ENCODE measurements at regions of chr9 and their contacts with region 1.

Region 1: GRCh38 chr9:127785023-127785932 is 556 bp upstream of the CDK9 start:
- DNase-seq: peak; percentile 97
- H3K4me3 ChIP-seq: peak overlapping the region; percentile 82 to 90
- H3K27ac ChIP-seq: peak overlapping the region; percentile 47 to 92; a peak in 3 of 4 replicates
- H3K4me1 ChIP-seq: peaks cover 6 to 18% of the 10 kb centered on the region in 2 experiments
- H3K27me3 ChIP-seq: no peaks in the 10 kb centered on the region
- CTCF ChIP-seq: peak; percentile 79
- EP300 ChIP-seq: no peak
- RAD21 ChIP-seq: peak; percentile 80

Region 2: GRCh38 chr9:126947529-126947928 is 837.7 kb before region 1 on chr9:
- CTCF ChIA-PET with region 1: no interaction called
- POLR2A ChIA-PET with region 1: no interaction called
- DNase-seq: no peak
- H3K4me3 ChIP-seq: no peak overlapping the region
- H3K27ac ChIP-seq: no peak overlapping the region
- H3K4me1 ChIP-seq: no peaks in the 10 kb centered on the region; a peak in 2 of 4 replicates
- H3K27me3 ChIP-seq: no peaks in the 10 kb centered on the region
- CTCF ChIP-seq: no peak
- EP300 ChIP-seq: no peak
- RAD21 ChIP-seq: peak; percentile 33; the same call in 1 of the 2 replicates

Region 3: DNA sequence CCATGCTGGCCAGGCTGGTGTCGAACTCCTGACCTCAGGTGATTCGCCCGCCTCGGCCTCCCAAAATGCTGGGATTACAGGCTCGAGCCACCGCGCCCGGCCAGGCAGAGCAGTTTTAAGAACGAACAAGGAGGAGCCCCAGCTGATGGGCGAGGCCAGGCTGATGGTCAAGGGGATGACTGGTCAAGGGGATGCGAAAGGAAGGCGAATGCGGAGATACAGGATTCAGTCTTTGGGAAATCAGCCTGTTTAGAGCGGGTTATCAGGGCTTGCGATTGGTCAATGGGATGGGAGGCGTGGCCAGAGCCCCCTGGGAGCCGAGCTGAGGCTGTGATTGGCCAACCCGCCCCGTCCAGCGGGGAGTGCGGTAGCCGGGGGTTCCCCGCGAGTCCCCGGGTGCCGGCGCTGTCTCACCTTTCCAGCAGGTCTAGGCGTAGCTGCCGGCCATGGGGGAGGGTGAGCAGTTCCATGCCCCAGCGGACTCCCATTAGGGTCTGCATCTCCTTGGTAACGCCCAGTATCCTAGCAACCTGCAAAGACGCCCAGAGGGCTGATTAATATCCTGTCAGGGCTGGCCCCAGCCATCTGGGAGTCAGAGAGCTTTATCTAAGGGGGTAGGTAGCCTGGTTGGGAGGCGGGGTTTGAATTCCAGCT is 42.7 kb before region 1 on chr9:
- CTCF ChIA-PET with region 1: interaction called, 34 read pairs
- POLR2A ChIA-PET with region 1: no interaction called
- DNase-seq: peak; percentile 81
- H3K4me3 ChIP-seq: no peak overlapping the region
- H3K27ac ChIP-seq: no peak overlapping the region
- H3K4me1 ChIP-seq: no peaks in the 10 kb centered on the region; a peak in 1 of 4 replicates
- H3K27me3 ChIP-seq: no peaks in the 10 kb centered on the region
- CTCF ChIP-seq: no peak
- EP300 ChIP-seq: no peak
- RAD21 ChIP-seq: no peak

Region 4: GRCh38 chr9:127754099-127755050 is 30.9 kb before region 1 on chr9:
- CTCF ChIA-PET with region 1: interaction called, 23 read pairs
- POLR2A ChIA-PET with region 1: interaction called, 7 read pairs
- DNase-seq: peak; percentile 95
- H3K4me3 ChIP-seq: peak overlapping the region; percentile 43 to 54; a peak in 2 of 4 replicates
- H3K27ac ChIP-seq: peak overlapping the region in 1 of 2 experiments; percentile 72; a peak in 2 of 4 replicates
- H3K4me1 ChIP-seq: peaks cover 0 to 20% of the 10 kb centered on the region in 2 experiments; a peak in 1 of 4 replicates
- H3K27me3 ChIP-seq: peaks cover 20% of the 10 kb centered on the region
- CTCF ChIP-seq: no peak
- EP300 ChIP-seq: no peak
- RAD21 ChIP-seq: no peak